ENCODE measurements at regions of chr12 and their contacts with region 1.

Region 1: DNA sequence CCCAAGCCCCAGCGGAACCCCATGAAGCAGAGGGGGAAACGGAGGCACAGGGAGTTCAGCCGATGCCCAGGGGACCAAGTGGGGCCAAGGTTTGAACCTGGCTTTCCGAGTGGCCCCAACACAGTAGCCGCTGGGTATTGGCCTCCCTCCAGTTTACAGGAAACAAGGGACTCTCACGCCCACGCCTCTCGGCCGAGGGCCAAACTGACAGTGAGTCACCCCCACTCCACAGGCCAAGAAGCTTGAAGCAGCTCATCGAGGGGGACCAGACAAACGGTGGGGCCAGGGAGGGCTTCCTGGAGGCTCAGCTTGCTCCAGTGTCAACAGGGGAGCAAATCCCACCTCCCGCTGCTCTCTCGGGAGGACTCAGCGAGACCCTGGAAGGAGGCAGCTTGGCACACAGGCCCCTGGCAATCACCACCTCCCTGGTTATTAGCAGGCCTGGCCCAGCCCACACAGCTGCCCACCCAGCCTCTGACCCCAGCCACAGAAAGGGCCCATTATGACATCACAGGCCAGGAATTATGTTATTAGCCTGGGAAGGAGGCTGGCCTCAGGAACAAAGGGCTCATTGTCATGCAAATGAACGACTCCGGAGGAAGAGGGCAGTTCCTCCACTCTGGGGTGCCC is 54.6 kb downstream of the NCOR2 start:
- DNase-seq: peak; percentile 91 to 93
- ATAC-seq: no peak
- H3K4me3 ChIP-seq: no peak overlapping the region
- H3K27ac ChIP-seq: peak overlapping the region; percentile 58
- H3K4me1 ChIP-seq: peaks cover 86% of the 10 kb centered on the region
- H3K27me3 ChIP-seq: no peaks in the 10 kb centered on the region
- CTCF ChIP-seq: no peak

Region 2: DNA sequence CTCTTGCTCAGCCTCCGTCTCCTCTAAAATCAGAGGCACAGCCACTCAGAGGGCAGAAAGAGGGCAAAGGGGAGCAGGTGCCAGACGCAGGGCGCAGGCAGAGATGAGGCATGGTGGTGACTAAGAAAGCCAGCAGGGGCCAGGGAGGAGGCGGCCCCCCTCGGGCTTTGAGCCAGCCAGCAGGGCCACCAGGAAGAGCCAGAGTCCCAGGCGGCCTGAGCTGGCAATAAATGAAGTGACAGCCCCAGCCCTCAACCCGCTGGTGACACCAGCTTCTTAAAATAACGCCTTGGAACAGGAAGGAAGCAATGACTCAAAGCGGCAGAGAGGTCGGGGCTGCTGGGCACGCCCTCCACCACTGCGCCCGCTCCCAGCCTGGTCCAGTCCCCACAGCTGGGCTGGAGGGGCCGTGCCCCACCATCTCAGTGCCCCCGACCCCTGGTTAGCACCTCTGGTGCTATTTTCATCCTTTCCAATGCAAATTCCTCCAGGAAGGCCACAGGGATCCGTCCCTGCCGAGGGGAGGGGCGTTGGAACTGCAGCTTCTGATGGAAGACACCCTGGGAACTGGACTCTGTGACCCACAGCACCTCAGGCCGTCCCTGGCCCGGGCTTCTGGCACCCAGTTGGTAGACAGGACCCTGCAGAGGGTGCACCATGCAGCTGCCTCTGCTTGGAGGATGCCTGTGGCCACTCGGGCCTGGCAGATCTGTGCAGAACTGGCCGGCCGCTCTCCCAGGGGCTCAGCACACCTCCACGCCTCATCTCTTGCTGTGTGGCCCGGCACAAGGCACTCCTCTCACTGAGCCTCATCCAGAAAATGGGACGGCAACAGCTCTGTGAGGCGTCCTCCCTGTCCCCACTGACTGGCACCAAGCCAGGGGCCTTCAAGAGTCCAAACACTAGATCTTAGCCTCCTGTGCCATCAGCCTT is 59.1 kb before region 1 on chr12:
- intact Hi-C with region 1: loop called (anchors 2 to 5 kb)
- DNase-seq: peak; percentile 93 to 97
- ATAC-seq: peak; percentile 82 to 86 (median 82)
- H3K4me3 ChIP-seq: peak overlapping the region; percentile 40
- H3K27ac ChIP-seq: peak overlapping the region; percentile 87
- H3K4me1 ChIP-seq: peaks cover 52% of the 10 kb centered on the region
- H3K27me3 ChIP-seq: no peaks in the 10 kb centered on the region
- CTCF ChIP-seq: no peak